ENCODE measurements at regions of chr4 and their contacts with region 1.

Region 1: DNA sequence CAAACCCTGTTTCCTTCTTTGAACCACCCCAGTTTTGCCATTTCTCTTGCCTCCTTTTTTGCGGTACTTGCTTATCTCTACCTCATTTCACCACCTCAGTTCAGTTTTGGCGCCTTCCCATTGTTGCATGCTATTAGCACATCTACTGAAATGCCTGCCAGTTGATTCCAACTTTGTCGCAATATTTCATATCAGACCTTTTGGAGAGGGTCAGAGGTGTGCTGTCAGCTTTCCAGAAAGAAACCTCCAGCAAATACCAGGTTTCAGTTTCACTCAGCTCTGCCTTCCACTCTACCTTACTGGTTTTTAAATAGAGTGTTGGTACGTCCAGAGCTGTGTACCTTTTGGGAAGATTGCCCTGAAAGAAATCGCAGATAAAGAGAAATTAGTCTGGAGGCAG is 91.9 kb upstream of the CPEB2 start:
- DNase-seq: no peak
- ATAC-seq: peak; percentile 34 to 73
- H3K4me3 ChIP-seq: no peak overlapping the region
- H3K27ac ChIP-seq: no peak overlapping the region
- H3K4me1 ChIP-seq: no peaks in the 10 kb centered on the region
- H3K27me3 ChIP-seq: no peaks in the 10 kb centered on the region

Region 2: DNA sequence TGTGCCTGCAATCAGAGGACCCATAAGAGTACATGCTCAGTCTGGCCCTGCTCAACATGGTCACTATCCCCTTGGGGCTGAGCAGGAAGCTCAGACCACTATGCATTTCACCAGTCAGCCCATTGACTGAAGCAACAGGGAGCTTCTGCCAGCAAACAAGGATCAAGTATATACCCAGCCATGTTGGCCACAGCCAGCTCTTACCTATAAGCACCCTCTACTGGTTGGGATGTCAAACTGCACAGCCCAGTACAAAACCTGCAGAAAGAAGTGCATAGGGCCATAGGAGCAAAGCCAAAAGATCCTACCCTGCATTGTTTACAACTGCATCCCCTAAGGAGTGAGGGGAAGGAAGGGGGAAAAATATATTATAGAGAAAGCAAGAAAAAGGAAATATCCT is 122.5 kb before region 1 on chr4:
- intact Hi-C with region 1: no loop called
- DNase-seq: no peak
- ATAC-seq: peak in 1 of 2 donors; percentile 14
- H3K4me3 ChIP-seq: no peak overlapping the region
- H3K27ac ChIP-seq: no peak overlapping the region
- H3K4me1 ChIP-seq: no peaks in the 10 kb centered on the region
- H3K27me3 ChIP-seq: no peaks in the 10 kb centered on the region

Region 3: DNA sequence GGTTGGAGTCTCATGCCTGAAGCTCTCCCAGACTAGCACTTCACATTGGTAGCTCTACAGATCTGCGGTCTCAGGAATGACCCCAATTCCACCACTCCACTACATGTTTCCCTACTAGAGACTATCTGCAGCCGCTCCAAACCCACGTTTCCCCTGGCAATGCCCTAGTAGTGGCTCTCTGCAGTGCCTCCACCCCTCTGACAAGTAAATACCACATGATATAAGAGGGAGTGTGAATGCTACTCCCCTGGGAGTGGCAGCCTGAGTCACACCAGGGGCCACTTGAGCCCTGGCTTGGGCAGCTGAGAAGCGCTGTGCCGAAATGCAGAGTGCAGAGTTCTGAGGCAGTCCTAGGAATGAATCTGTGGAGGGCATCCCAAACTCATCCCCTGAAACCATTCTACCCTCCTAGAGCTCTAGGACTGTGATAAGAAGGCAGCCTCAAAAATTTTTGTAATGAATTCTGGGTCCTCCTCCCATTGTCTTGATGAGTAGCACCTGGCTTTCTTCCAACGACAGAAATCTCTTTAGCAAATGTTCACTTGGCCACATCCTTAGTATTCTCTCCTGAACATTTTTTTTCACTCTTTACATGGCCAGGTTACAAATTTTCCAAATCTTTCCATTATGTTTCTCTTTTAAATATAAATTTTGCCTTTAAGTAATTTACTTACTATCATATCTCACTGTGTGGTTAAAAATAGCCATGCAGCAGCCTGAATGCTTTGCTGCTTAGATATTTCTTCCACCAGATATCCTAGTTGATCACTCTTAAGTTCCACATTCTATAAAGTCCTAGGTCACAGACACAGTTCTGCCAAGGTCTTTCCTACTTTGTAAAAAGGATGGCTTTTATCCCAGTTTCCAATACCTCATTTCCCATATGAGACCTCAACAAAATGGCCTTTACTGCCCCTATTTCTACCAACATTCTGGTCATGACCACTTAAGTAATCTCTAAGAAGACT is 68.3 kb before region 1 on chr4:
- intact Hi-C with region 1: loop called in 3 of 4 experiments (anchors 5 to 10 kb)
- DNase-seq: peak; percentile 50 to 63 (median 50)
- ATAC-seq: peak; percentile 84 to 94
- H3K4me3 ChIP-seq: no peak overlapping the region
- H3K27ac ChIP-seq: peak overlapping the region; percentile 55
- H3K4me1 ChIP-seq: peaks cover 2% of the 10 kb centered on the region
- H3K27me3 ChIP-seq: no peaks in the 10 kb centered on the region

Measured in right cardiac atrium (tissue), 5 donors.